AG04450 (cell line): ENCODE measurements at regions of chr15 and their contacts with region 1.

Region 1: DNA sequence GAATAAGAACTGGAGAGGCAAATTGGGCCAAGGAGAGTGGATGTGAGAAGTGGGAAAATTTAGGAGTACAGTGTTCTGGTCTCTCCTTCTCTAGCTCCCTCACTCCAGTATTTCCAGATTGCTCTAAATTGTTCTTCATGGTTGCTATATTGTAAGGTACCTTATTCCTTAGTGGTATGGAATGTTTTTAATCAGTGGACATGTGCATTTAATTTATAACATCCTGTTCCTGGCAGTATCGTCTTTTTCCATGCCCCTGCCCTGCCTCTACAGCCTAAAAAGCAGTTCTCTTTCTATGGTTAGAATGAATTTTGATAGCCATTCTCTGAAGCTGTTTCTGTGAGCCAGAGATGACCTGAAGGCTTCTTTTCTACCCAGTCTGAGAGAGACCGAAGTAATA is 180.5 kb downstream of the TCF12 start:
- DNase-seq: no peak
- H3K4me3 ChIP-seq: no peak overlapping the region
- H3K27ac ChIP-seq: no peak overlapping the region
- H3K27me3 ChIP-seq: no peaks in the 10 kb centered on the region
- CTCF ChIP-seq: no peak

Region 2: DNA sequence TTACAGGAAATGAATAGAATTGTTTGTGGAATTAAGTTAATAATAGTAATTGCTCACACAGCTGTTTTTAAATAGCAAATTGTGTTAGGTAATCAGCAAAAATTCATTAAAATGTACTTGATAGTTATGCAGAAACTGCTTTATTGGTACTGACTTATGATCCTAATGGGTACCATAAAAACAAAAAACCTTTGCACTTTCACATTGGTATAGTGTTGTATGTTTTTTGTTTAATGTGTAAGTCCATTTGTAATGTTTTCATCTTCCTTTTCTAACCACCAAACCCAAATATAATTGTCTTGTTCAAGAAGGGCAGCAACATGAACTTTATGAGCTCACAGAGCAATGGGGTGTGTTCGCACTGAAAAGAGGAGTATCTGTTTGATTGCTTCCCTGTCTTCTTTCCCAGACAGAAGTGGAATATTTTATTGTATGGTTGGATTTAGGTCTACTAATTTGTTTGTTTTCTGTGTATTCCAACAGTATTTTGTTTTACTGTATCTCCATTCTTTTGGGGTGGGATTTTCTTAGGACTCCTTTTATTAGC is 44.6 kb before region 1 on chr15:
- CTCF ChIA-PET with region 1: no interaction called
- POLR2A ChIA-PET with region 1: interaction called, 10 read pairs
- DNase-seq: no peak
- H3K4me3 ChIP-seq: no peak overlapping the region
- H3K27ac ChIP-seq: no peak overlapping the region
- H3K27me3 ChIP-seq: no peaks in the 10 kb centered on the region
- CTCF ChIP-seq: no peak